ENCODE measurements at regions of chr2 and their contacts with region 1.

Region 1: DNA sequence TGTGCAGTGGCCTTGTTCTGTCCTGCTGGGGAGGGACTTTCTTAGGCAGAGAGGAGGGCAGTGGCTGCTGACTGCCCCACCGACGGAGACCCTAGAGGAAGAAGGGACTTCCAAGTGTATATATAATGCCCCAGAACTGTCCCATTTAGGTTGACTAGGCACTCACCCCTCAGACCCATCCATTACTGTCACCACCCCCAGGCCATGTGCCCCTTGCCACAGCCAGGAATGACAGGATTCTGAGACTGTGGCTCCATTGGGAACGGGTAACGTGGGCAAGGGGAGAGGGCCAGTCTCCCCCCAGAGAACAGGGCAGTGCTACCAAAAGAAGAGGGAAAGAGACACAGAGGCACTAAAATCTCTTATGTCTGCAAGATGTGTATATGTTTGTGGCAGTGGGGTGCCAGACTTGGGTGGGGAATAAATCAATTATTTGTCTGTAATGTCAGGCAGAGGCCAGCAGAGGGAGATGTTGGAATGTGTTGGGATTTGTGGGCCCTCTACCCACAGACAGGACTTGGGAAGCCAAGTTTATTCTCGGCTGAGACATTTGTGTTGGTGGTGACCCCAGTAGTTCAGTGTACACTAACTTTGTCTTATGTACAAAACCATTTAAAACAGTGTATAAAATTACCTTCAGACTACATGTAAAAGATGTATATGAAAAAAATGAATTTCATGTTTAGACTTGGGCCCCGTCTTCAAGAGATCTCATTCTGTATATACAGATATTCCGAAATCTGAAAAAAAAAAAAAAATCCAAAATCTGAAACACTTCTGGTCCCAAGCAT is 24.0 kb upstream of the TMEM37 start:
- DNase-seq: peak; percentile 45 to 55
- H3K4me3 ChIP-seq: no peak overlapping the region
- H3K27ac ChIP-seq: no peak overlapping the region
- H3K4me1 ChIP-seq: peaks cover 4 to 9% of the 10 kb centered on the region in 2 donors
- H3K27me3 ChIP-seq: no peaks in the 10 kb centered on the region
- CTCF ChIP-seq: peak; percentile 41 to 97 (median 84)
- POLR2A ChIP-seq: no peak

Region 2: DNA sequence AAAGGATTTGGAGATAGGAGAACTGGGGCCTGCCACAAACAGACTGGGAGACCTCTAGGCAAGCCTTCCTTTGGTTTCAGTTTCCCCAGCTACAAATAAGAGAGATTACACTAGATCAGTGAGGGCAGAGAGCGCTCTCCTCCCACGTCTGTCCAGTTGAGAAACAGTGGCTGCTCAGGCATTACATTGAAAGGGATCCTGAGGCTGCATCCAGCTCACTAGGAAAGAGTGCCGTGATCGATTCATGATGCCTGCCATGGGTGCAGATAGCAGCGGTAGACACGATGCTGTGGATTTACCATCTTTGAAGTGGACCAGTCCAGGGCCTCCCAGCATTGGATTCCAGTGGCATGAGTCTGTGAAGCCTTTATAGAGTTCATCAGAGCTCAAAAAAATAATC is 622.8 kb before region 1 on chr2:
- intact Hi-C with region 1: no loop called
- DNase-seq: no peak
- H3K4me3 ChIP-seq: no peak overlapping the region
- H3K27ac ChIP-seq: no peak overlapping the region
- H3K4me1 ChIP-seq: no peaks in the 10 kb centered on the region
- H3K27me3 ChIP-seq: no peaks in the 10 kb centered on the region
- CTCF ChIP-seq: no peak
- POLR2A ChIP-seq: no peak

Region 3: DNA sequence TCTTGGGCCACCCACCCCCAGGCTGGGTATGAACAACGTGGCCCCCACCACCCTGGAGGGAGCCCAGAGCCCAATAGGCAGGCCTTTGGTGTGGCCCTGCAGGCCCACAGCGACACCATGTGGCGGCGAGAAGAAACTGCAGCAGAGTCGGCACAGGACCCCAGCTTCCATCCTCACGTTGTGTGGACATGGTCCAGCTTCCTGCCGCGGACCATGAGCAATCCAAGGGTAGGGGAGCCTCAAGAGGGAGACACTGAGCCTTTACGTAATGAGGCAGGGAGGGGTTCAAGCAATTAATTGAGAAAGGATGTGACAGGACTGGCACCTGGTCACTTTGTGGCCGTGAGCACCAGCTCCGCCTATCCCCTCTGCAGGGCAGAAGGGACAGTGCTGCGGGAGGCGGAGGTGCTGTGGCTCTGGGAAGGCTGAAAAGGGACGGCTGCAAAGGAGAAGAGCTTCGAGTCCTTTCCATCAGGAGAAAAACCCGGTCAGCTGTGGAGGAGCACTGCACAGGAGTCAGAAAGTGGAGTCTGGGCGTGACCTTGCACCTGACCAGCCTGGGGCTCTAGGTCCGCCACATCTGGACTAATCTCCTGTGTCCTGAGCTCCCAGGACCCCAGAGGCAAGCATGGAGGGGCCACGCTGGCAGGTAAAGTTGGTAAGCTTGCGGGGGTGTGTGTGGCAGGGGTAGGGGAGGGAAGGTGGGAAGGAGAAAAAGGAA is 68.8 kb after region 1 on chr2:
- intact Hi-C with region 1: loop called (anchors 2 kb)
- DNase-seq: peak; percentile 43 to 50
- H3K4me3 ChIP-seq: no peak overlapping the region
- H3K27ac ChIP-seq: no peak overlapping the region
- H3K4me1 ChIP-seq: peaks cover 0 to 6% of the 10 kb centered on the region in 2 donors
- H3K27me3 ChIP-seq: no peaks in the 10 kb centered on the region
- CTCF ChIP-seq: peak; percentile 87 to 97 (median 94)
- POLR2A ChIP-seq: no peak

Measured in thyroid gland (tissue), 4 donors.